IMR-90 (cell line): ENCODE measurements at regions of chr20 and their contacts with region 1.

Region 1: DNA sequence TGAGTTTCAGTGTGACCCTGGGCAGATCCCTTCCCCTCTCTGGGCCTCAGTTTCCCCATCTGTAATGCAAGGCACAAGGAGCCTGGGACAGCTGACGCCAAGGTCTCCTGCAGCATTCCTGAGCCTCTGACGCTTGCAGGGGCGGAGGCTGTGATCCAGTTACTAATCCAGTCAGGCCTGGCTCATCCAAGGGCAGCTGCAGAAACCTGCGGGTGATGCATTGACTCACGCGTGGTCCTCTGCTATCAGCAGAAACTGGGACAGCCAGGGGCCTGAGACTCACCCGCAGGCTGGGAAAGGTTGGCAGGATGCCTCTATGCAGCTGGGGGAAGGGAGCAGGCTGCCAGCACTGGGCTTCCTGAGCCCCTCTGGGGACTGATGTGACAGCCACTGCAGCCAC is 65.0 kb upstream of the SIRPA start:
- DNase-seq: peak; percentile 99
- ATAC-seq: peak; percentile 91
- H3K4me3 ChIP-seq: no peak overlapping the region
- H3K27ac ChIP-seq: peak overlapping the region; percentile 96
- H3K4me1 ChIP-seq: peaks cover 31% of the 10 kb centered on the region
- H3K27me3 ChIP-seq: no peaks in the 10 kb centered on the region
- CTCF ChIP-seq: no peak
- POLR2A ChIP-seq: no peak
- RAD21 ChIP-seq: peak; percentile 21

Region 2: DNA sequence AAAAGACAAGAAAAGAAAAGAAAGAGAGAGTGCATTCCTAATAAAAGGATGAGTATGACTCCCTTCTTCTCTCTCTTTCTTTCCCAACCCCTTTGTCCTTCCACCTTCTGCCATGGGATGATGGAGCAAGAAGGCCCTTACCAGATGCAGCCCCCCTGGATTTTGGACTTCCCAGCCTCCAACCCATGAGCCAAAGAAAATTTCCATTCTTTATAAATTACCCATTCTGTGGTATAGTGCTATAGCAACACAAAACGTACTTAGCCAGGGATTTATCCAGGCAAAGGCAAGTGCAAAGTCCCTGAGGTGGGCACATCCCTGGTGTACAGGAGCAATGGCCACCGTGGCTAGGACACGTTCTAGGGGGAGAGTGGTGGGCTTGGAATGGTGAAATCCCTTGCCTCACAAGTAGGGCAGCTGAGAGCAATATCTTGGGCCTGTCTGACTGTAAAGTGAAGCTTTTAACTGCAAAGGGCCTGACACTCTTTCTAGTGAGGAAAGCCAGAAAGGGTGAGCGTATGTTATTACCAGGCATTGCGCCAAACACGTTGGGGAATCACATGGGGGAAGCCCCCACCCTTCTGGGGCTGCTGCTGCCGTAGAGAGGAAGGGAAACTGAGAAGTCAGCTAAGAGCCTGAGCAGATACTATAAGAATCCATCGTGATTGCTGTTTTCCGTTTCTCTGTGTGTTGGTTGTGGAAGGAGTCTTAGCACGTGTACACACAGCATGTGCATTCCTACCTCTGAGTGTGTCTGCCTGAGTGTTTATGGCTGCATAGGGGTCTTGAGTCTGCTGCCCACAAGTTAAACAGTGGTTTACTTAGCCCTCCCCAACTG is 14.3 kb after region 1 on chr20:
- CTCF ChIA-PET with region 1: interaction called, 3 read pairs
- POLR2A ChIA-PET with region 1: no interaction called
- dilution Hi-C with region 1: no loop called
- in situ Hi-C with region 1: no loop called
- intact Hi-C with region 1: loop called (anchors 2 kb)
- DNase-seq: peak; percentile 92
- ATAC-seq: peak; percentile 75
- H3K4me3 ChIP-seq: no peak overlapping the region
- H3K27ac ChIP-seq: peak overlapping the region; percentile 88
- H3K4me1 ChIP-seq: peaks cover 18% of the 10 kb centered on the region
- H3K27me3 ChIP-seq: no peaks in the 10 kb centered on the region
- CTCF ChIP-seq: no peak
- POLR2A ChIP-seq: no peak
- RAD21 ChIP-seq: no peak

Region 3: DNA sequence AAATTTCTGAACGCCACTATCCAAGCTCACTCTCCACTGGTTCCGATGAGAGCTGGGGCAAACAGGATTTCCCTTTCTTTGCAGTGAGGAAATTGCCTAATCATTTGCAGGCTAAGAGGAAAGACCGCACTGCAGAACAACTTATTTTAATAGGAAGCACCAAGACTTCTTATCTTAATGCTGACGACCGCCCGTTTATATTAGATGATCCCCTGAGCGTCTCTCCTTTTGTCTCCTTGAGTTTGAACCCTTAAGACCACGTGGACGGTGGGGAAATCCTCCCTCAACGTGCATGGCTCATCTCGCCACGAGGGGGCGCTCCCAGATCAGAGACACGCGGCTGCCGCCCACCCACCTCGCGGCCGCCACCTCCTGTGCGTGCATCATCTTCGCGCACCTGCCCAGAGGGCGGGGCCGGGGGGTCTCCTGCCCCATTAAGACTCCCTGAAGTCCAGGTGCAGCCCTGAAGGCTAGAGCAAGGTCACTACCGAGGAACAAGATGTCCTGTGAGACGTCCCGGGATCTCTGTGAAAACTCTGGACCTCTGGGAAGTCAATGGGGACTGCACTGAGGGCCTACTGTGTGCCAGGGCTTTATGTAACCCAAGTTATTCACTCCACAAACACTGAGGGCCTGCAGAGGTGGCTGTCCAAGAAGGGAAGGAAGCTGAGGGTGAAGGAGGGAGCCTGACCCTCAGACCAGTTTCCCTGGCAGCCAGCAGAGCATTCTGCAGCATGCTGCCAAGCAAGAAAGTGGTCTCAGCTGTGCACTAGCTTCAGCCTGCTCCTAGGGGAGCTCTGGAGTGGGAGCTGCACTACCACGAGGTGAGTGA is 135.5 kb after region 1 on chr20:
- CTCF ChIA-PET with region 1: interaction called, 11 read pairs
- POLR2A ChIA-PET with region 1: no interaction called
- dilution Hi-C with region 1: no loop called
- in situ Hi-C with region 1: no loop called
- intact Hi-C with region 1: no loop called
- DNase-seq: peak; percentile 54
- ATAC-seq: peak; percentile 83
- H3K4me3 ChIP-seq: no peak overlapping the region
- H3K27ac ChIP-seq: no peak overlapping the region
- H3K4me1 ChIP-seq: no peaks in the 10 kb centered on the region
- H3K27me3 ChIP-seq: peaks cover 60% of the 10 kb centered on the region
- CTCF ChIP-seq: peak; percentile 86
- POLR2A ChIP-seq: no peak
- RAD21 ChIP-seq: peak; percentile 84

Region 4: DNA sequence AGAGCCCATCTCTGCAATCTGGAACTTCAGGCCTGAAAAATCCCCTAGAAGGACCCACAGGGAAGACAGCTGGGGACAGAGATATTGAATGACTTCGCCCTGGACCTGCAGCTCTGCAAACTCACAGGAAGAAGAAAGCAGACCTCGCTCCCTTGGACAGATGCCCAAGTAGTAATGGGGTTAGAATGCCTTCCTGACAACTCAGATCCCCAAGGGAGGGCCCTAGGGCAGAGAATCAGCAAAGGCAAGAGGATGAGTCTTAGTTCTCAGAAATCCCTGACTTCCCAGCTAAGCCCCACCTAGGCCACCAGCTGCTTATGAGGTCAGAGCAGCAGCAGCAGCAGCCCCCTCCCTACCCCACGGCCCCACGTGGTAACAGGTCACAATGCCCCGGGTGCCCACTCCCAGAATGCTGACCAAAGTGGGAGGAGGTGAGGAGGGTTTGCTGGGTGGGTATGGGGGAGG is 984.4 kb after region 1 on chr20 and contains the start of gene C20orf141:
- CTCF ChIA-PET with region 1: no interaction called
- POLR2A ChIA-PET with region 1: no interaction called
- dilution Hi-C with region 1: no loop called
- in situ Hi-C with region 1: no loop called
- intact Hi-C with region 1: no loop called
- DNase-seq: peak; percentile 99
- ATAC-seq: peak; percentile 96
- H3K4me3 ChIP-seq: no peak within 1 kb of the TSS
- H3K27ac ChIP-seq: peak within 1 kb of the TSS; percentile 56
- H3K4me1 ChIP-seq: peaks cover 27% of the 10 kb centered on the region
- H3K27me3 ChIP-seq: no peaks in the 10 kb centered on the region
- CTCF ChIP-seq: no peak
- POLR2A ChIP-seq: no peak
- RAD21 ChIP-seq: 0 out of 2 replicates have a peak, but pooled peaks have one; percentile 6
- total RNA-seq, gene C20orf141: 0.36 TPM in 1 of 2 replicates, not detected in the other